Stomach (tissue), 19 donors: ENCODE measurements at regions of chr4 and their contacts with region 1.

Region 1: DNA sequence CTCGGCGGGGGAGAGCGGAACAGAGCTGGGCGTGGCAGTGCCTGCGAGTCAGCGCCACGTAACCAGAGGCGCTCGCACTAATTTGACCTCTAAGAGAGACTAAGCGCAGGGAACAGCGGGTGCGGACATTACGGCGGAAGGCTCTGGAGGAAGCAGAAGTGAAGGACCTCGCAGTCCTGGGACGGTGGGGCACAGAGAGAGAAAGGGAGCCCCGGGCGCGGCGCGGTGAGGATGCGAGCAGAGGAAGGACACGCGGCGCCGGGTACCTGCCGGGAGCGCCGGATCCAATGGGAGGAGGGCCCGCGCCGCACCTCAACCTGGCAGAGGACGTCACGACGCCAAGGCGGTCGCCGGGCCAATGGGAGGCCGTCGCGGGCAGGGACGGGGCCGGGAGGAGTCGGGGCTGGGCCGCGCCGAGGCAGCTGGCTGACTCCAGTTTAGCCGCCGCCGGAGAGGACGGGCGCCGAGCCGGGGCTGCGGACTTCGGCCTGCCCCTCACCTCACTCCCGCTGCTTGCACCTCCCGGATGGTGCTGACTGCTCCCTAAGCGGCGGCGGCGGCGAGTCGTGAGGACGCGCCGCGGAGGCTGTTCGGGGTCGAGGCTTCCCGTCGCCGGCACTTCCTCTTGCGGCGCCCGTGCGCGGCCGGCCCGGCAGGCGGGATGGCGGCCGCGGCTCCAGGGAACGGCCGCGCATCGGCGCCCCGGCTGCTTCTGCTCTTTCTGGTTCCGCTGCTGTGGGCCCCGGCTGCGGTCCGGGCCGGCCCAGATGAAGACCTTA is at the start of gene TMEM165:
- DNase-seq: peak; percentile 96 to 98
- H3K4me3 ChIP-seq: peak within 1 kb of the TSS; percentile 68 to 76 (median 76)
- H3K27ac ChIP-seq: peak within 1 kb of the TSS; percentile 95 to 99 (median 97)
- H3K4me1 ChIP-seq: peaks cover 28 to 42% (median 37%) of the 10 kb centered on the region in 4 donors
- H3K27me3 ChIP-seq: no peaks in the 10 kb centered on the region
- CTCF ChIP-seq: peak in 1 of 7 experiments; percentile 14
- EP300 ChIP-seq: no peak
- POLR2A ChIP-seq: peak in 3 of 4 donors; percentile 61 to 95 (median 82)
- total RNA-seq, gene TMEM165: 21.6 to 365 (median 206) TPM

Region 2: DNA sequence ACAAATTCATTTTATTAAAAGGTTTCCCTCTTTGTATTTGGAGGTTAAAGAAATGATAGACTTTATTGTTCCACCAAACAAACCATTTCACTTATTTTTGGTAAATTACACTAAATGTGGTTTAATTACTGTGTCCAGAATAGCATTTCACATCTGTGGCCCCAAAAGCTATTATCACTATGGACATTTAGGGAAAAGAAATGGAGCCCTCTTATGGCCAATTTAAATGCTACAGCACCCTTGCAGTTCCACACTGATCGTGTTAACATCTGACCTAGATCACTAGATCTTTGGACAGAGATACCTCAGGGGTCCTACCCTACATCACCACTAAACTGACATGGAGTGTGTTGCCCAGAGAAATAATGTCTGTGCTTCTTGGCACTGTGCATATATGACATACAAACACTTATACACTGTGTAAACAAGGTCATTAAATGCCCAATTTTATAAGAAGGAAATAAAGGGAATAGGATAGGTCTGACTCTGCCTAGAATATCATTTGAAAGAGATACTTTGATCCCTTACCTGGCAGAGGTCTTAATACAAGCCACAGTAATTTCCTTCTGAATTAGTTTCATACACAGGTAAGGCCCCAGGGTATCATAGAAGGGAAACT is 434.3 kb before region 1 on chr4:
- intact Hi-C with region 1: no loop called
- DNase-seq: peak in 1 of 2 donors; percentile 52
- H3K4me3 ChIP-seq: no peak overlapping the region
- H3K27ac ChIP-seq: no peak overlapping the region
- H3K4me1 ChIP-seq: no peaks in the 10 kb centered on the region
- H3K27me3 ChIP-seq: no peaks in the 10 kb centered on the region
- CTCF ChIP-seq: peak in 4 of 7 experiments; percentile 6 to 46 (median 28)
- EP300 ChIP-seq: no peak
- POLR2A ChIP-seq: no peak

Region 3: GRCh38 chr4:55345980-55346850 is 49.5 kb before region 1 on chr4 and contains the start of gene SRD5A3:
- intact Hi-C with region 1: loop called (anchors 5 kb)
- DNase-seq: peak; percentile 88 to 95
- H3K4me3 ChIP-seq: peak within 1 kb of the TSS; percentile 58 to 78 (median 70)
- H3K27ac ChIP-seq: peak within 1 kb of the TSS; percentile 92 to 98 (median 97)
- H3K4me1 ChIP-seq: peaks cover 11 to 32% (median 21%) of the 10 kb centered on the region in 4 donors
- H3K27me3 ChIP-seq: no peaks in the 10 kb centered on the region
- CTCF ChIP-seq: peak in 5 of 7 experiments; percentile 66 to 96 (median 86)
- EP300 ChIP-seq: no peak
- POLR2A ChIP-seq: no peak
- total RNA-seq, gene SRD5A3: 1.8 to 11.2 (median 9.3) TPM in 4 of 5 donors, not detected in the other